Right lobe of liver (tissue), 6 donors: ENCODE measurements at regions of chr14 and their contacts with region 1.

Region 1: DNA sequence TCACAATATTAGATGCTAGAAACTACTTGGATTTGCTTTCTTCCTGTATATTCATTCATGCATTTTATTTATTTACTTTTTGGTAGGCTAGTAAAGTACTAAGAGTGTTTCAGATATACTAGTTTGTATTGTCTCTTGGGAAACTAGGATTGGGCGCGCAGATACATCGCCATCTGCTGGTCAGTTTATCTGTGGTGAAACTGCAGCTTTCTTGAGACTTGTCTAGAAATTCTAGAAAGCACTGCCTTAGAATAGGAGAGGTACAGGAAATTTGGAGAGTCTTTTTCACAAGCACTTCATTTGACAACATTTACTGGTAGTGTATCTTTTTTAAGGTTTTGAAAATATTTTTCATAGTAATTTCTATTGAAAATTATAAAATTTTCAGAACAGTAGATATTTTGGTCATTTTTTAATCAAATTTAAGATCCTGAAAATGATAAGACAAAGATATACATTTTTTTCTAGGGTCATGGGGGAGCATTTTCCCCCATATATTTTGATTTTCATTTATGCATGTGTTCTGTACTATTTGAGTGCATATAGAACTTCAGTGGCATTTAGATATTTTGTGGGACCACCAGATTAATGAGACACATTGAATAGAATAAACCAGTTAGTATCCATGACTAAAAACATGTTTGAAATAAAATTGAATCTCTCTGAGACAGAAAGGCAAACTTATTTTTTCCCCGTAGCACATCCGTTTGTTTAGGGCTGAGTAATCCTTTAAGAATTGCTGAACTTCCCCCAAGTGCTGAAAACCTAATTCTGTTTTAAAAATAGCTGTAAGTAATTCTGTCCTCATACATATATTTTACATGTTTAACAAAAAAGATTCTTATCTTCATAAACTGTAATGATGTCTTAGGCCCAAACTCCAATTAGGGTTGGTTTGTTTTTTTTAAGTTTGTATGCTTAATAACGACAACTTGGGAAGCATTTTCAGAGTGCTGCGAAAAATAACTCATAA is 44.5 kb downstream of the SLC38A6 start:
- DNase-seq: peak in 2 of 3 donors; percentile 56 to 63
- ATAC-seq: peak; percentile 86 to 92 (median 88)
- H3K4me3 ChIP-seq: no peak overlapping the region
- H3K27ac ChIP-seq: no peak overlapping the region
- H3K4me1 ChIP-seq: no peaks in the 10 kb centered on the region
- H3K27me3 ChIP-seq: no peaks in the 10 kb centered on the region
- CTCF ChIP-seq: peak; percentile 88 to 94 (median 91)
- POLR2A ChIP-seq: no peak

Region 2: GRCh38 chr14:60628892-60629291 is 396.6 kb before region 1 on chr14:
- intact Hi-C with region 1: loop called in 1 of 2 experiments (anchors 5 kb)
- DNase-seq: no peak
- ATAC-seq: no peak
- H3K4me3 ChIP-seq: no peak overlapping the region
- H3K27ac ChIP-seq: no peak overlapping the region
- H3K4me1 ChIP-seq: no peaks in the 10 kb centered on the region
- H3K27me3 ChIP-seq: no peaks in the 10 kb centered on the region
- CTCF ChIP-seq: no peak
- POLR2A ChIP-seq: no peak

Region 3: GRCh38 chr14:60878121-60878520 is 147.4 kb before region 1 on chr14:
- intact Hi-C with region 1: no loop called
- DNase-seq: no peak
- ATAC-seq: no peak
- H3K4me3 ChIP-seq: no peak overlapping the region
- H3K27ac ChIP-seq: no peak overlapping the region
- H3K4me1 ChIP-seq: peaks cover 0 to 6% (median 0%) of the 10 kb centered on the region in 4 donors
- H3K27me3 ChIP-seq: no peaks in the 10 kb centered on the region
- CTCF ChIP-seq: no peak
- POLR2A ChIP-seq: no peak